ENCODE measurements at regions of chr20 and their contacts with region 1.

Region 1: GRCh38 chr20:39986173-39986904 is 702.7 kb downstream of the MAFB start:
- DNase-seq: peak; percentile 78 to 90
- ATAC-seq: peak; percentile 97 to 98 (median 98)
- H3K4me3 ChIP-seq: peak overlapping the region; percentile 44
- H3K27ac ChIP-seq: peak overlapping the region; percentile 98
- H3K4me1 ChIP-seq: peaks cover 41% of the 10 kb centered on the region
- H3K27me3 ChIP-seq: no peaks in the 10 kb centered on the region
- CTCF ChIP-seq: no peak

Region 2: DNA sequence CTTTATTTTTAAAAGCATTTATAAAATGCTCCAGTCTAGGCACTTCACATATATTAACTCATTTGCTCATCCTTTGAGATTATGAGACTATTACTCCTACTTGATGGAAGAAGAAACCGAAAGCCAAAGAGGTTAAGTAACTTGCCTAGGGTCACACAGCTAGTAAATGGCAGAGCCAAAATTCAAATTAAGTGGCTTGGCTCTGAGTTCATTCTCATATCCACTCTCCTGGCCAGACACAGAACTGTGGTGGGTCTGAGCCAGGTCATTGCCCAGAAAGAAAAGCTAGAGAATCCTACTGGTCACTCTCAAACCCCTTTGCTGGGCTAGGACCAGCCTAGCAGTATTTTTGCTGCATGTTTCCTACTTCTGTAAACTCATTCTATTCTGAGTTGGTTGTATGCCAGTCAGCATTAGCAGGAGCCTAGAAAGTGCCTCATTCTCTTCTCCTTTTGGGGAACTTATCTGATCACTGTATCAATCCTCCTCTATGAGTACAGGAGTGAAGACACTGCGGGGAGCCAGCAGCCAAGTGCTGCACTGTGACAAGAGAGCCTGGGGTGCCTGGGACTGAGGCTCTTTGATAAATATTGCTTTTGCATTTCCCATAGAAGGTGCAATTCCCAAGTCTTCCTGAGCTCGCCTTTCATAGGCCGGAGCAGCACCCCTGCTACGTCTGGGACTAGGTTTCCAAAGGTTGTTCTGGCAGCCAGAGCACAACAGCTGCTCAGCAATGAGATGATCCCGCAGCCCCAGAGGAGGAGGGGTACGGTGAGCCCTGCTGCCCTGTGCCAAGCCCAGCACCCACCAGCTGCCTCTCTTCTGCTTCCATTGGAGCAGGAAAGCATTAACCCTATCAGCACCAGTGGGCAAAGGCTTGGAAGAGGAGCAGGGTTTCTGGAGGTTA is 25.6 kb before region 1 on chr20:
- intact Hi-C with region 1: loop called in 1 of 2 experiments (anchors 2 kb)
- DNase-seq: peak; percentile 50 to 80
- ATAC-seq: peak; percentile 98 to 99 (median 99)
- H3K4me3 ChIP-seq: peak overlapping the region; percentile 12
- H3K27ac ChIP-seq: peak overlapping the region; percentile 79
- H3K4me1 ChIP-seq: peaks cover 33% of the 10 kb centered on the region
- H3K27me3 ChIP-seq: no peaks in the 10 kb centered on the region
- CTCF ChIP-seq: peak; percentile 18

Region 3: DNA sequence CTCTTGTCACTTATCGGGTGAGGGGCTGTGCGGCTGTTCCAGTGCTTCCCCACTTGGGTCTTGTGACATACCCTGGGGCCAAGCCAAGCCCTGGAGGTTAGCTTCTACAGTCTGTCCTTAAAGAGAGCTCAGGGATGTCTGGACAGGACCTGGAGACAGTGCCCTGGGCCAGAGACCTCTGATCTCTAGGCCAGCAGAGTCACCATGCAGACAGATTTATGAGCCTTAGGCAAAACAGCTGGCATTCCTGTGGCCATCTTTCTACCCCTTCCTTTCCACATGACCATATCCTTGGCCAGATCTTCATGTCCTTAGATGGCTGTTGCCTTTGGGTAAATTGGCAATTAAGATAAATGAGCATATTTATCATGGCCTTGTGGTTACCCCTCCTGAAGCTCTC is 24.1 kb after region 1 on chr20:
- intact Hi-C with region 1: no loop called
- DNase-seq: peak; percentile 24 to 38
- ATAC-seq: peak; percentile 54 to 98 (median 82)
- H3K4me3 ChIP-seq: no peak overlapping the region
- H3K27ac ChIP-seq: peak overlapping the region; percentile 31
- H3K4me1 ChIP-seq: no peaks in the 10 kb centered on the region
- H3K27me3 ChIP-seq: no peaks in the 10 kb centered on the region
- CTCF ChIP-seq: no peak